ENCODE measurements at regions of chr19 and their contacts with region 1.

Region 1: GRCh38 chr19:3984908-3985642 is at the start of gene EEF2:
- DNase-seq: peak; percentile 91
- ATAC-seq: peak; percentile 38
- H3K4me3 Mint-ChIP-seq: peak within 1 kb of the TSS; percentile 96
- H3K27ac Mint-ChIP-seq: peak within 1 kb of the TSS; percentile 91
- H3K4me1 Mint-ChIP-seq: peaks cover 65% of the 10 kb centered on the region
- H3K27me3 Mint-ChIP-seq: no peaks in the 10 kb centered on the region
- CTCF ChIP-seq: no peak
- total RNA-seq, gene EEF2: 2,958 and 3,229 TPM in 2 replicates

Region 2: GRCh38 chr19:4007021-4007835 is 22.2 kb after region 1 on chr19 and contains the start of gene PIAS4:
- CTCF ChIA-PET with region 1: interaction called, 24 read pairs
- POLR2A ChIA-PET with region 1: interaction called, 47 read pairs
- intact Hi-C with region 1: loop called (anchors 1 kb)
- DNase-seq: peak; percentile 90
- ATAC-seq: peak; percentile 87
- H3K4me3 Mint-ChIP-seq: peak within 1 kb of the TSS; percentile 84
- H3K27ac Mint-ChIP-seq: peak within 1 kb of the TSS; percentile 74
- H3K4me1 Mint-ChIP-seq: peaks cover 31% of the 10 kb centered on the region
- H3K27me3 Mint-ChIP-seq: no peaks in the 10 kb centered on the region
- CTCF ChIP-seq: no peak
- total RNA-seq, gene PIAS4: 36.4 and 37.2 TPM in 2 replicates

Region 3: GRCh38 chr19:4077882-4078614 is 93.0 kb after region 1 on chr19:
- CTCF ChIA-PET with region 1: interaction called, 3 read pairs
- POLR2A ChIA-PET with region 1: interaction called, 15 read pairs
- intact Hi-C with region 1: no loop called
- DNase-seq: peak; percentile 52
- ATAC-seq: peak; percentile 88
- H3K4me3 Mint-ChIP-seq: peak overlapping the region; percentile 88
- H3K27ac Mint-ChIP-seq: peak overlapping the region; percentile 90
- H3K4me1 Mint-ChIP-seq: peaks cover 19% of the 10 kb centered on the region
- H3K27me3 Mint-ChIP-seq: no peaks in the 10 kb centered on the region
- CTCF ChIP-seq: no peak

Region 4: GRCh38 chr19:4123615-4124568 is 138.8 kb after region 1 on chr19 and contains the start of gene MAP2K2:
- CTCF ChIA-PET with region 1: no interaction called
- POLR2A ChIA-PET with region 1: interaction called, 4 read pairs
- intact Hi-C with region 1: loop called (anchors 5 kb)
- DNase-seq: peak; percentile 97
- ATAC-seq: peak; percentile 96
- H3K4me3 Mint-ChIP-seq: peak within 1 kb of the TSS; percentile 85
- H3K27ac Mint-ChIP-seq: peak within 1 kb of the TSS; percentile 78
- H3K4me1 Mint-ChIP-seq: peaks cover 24% of the 10 kb centered on the region
- H3K27me3 Mint-ChIP-seq: no peaks in the 10 kb centered on the region
- CTCF ChIP-seq: no peak
- total RNA-seq, gene MAP2K2: 126 TPM in 2 replicates

Region 5: GRCh38 chr19:4208385-4209094 is 223.5 kb after region 1 on chr19:
- CTCF ChIA-PET with region 1: interaction called, 8 read pairs
- POLR2A ChIA-PET with region 1: no interaction called
- intact Hi-C with region 1: loop called (anchors 1 kb)
- DNase-seq: no peak
- ATAC-seq: no peak
- H3K4me3 Mint-ChIP-seq: no peak overlapping the region
- H3K27ac Mint-ChIP-seq: no peak overlapping the region
- H3K4me1 Mint-ChIP-seq: peaks cover 3% of the 10 kb centered on the region
- H3K27me3 Mint-ChIP-seq: peaks cover 2% of the 10 kb centered on the region
- CTCF ChIP-seq: no peak

Region 6: GRCh38 chr19:4400135-4400936 is 415.3 kb after region 1 on chr19 and contains the start of gene SH3GL1:
- CTCF ChIA-PET with region 1: no interaction called
- POLR2A ChIA-PET with region 1: interaction called, 4 read pairs
- intact Hi-C with region 1: loop called (anchors 10 kb)
- DNase-seq: peak; percentile 95
- ATAC-seq: peak; percentile 65
- H3K4me3 Mint-ChIP-seq: peak within 1 kb of the TSS; percentile 88
- H3K27ac Mint-ChIP-seq: peak within 1 kb of the TSS; percentile 91
- H3K4me1 Mint-ChIP-seq: peaks cover 59% of the 10 kb centered on the region
- H3K27me3 Mint-ChIP-seq: no peaks in the 10 kb centered on the region
- CTCF ChIP-seq: peak; percentile 58
- total RNA-seq, gene SH3GL1: 33.8 and 43.7 TPM in 2 replicates

Measured in activated B cell treated with CpG ODN at 0.5 μM for 24 hours (primary cell).